Motor neuron (in vitro differentiated cells): ENCODE measurements at regions of chr11 and their contacts with region 1.

Region 1: DNA sequence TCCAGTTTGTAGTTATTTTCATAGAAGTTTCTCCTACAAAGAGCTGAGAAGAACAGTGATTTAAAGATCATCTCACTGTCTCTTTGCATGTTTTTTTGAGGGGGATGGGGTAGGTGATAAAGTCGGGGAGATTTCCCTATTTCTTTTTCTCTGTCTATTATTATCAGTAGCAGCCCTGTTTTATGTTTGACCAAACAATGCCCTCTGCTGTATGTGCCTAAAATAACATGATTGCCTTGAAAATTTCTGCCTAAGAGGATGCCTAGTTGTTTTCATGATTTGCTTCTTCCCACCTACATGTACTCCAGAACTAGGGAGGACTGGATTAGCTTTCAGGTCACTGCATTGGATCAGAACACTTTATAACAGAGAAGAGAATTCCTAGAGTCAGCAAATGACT is 1330.2 kb downstream of the LRRC4C start:
- ATAC-seq: peak in 4 of 8 experiments; percentile 33 to 42 (median 36)
- H3K4me3 ChIP-seq: no peak overlapping the region
- H3K27ac ChIP-seq: no peak overlapping the region
- H3K4me1 ChIP-seq: peaks cover 7 to 23% of the 10 kb centered on the region in 2 donors

Region 2: GRCh38 chr11:40293655-40294348 is 164.5 kb after region 1 on chr11:
- in situ Hi-C with region 1: loop called in 1 of 9 experiments (anchors 25 kb)
- ATAC-seq: peak; percentile 78 to 92 (median 86)
- H3K4me3 ChIP-seq: peak overlapping the region; percentile 43 to 79 (median 48)
- H3K27ac ChIP-seq: peak overlapping the region in 1 of 2 donors; percentile 24
- H3K4me1 ChIP-seq: peaks cover 0 to 2% of the 10 kb centered on the region in 2 donors